ENCODE measurements at regions of chr10 and their contacts with region 1.

Region 1: GRCh38 chr10:72834183-72834825 is 59.2 kb upstream of the OIT3 start:
- DNase-seq: peak in 1 of 2 donors; percentile 38
- H3K4me3 ChIP-seq: no peak overlapping the region
- CTCF ChIP-seq: no peak
- POLR2A ChIP-seq: no peak

Region 2: GRCh38 chr10:72692057-72692910 is 142.0 kb before region 1 on chr10 and contains the start of gene MCU:
- intact Hi-C with region 1: loop called (anchors 10 kb)
- DNase-seq: peak; percentile 95 to 99
- H3K4me3 ChIP-seq: peak within 1 kb of the TSS; percentile 58
- CTCF ChIP-seq: no peak
- POLR2A ChIP-seq: no peak
- total RNA-seq, gene MCU: 30.0 to 42.8 (median 34.1) TPM